Activated CD4-positive, alpha-beta T cell treated with anti-CD3 and anti-CD28 coated beads, Interleukin-2, amount 10 ng/mL, durations not matched to agents 24 days and 14 days (primary cell): ENCODE measurements at regions of chr10 and their contacts with region 1.

Region 1: DNA sequence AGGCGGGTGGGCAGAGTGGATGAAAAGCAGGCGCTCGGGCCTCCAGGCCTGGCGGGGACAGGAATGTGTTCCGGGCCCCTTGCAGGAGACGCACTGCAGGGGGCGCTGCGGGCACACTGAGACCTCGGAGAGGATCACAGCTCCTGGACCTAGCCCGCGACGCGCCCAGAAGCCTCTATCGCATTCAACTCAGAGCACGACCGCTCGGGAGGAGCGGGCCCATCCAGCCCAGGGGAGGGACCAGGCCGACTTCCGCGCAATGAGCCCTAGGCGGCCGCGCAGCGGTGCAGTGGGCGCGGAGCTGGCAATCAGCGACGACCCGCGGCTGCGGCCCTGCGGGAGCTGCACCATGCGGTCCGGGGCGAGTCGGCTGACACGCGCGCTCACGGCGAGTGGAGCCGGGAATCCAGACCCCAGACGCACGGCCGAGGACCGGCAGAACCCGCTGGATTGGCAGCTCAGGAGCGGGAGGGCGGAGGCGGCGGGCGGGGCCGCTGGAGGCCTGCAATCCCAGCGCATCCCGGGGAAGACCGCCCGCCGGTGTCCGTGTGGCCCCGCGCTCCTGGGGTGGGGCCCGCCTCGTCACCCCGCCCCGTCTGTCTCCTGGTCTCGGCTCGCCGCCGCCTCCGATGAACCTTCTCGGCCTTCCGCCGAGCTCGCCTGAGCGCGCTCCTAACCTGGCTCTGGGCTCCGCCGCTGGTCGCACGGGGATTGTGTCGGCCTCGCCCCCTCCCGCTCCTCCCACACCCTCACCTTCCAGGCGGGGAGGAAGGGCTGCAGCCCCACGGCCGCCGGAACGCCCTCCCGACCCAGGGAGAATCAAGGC is 33.5 kb upstream of the GRID1 start:
- DNase-seq: peak; percentile 98
- H3K4me3 Mint-ChIP-seq: peak overlapping the region; percentile 89
- H3K27ac Mint-ChIP-seq: peak overlapping the region; percentile 95
- H3K4me1 Mint-ChIP-seq: peaks cover 22% of the 10 kb centered on the region
- H3K27me3 Mint-ChIP-seq: peaks cover 6% of the 10 kb centered on the region

Region 2: DNA sequence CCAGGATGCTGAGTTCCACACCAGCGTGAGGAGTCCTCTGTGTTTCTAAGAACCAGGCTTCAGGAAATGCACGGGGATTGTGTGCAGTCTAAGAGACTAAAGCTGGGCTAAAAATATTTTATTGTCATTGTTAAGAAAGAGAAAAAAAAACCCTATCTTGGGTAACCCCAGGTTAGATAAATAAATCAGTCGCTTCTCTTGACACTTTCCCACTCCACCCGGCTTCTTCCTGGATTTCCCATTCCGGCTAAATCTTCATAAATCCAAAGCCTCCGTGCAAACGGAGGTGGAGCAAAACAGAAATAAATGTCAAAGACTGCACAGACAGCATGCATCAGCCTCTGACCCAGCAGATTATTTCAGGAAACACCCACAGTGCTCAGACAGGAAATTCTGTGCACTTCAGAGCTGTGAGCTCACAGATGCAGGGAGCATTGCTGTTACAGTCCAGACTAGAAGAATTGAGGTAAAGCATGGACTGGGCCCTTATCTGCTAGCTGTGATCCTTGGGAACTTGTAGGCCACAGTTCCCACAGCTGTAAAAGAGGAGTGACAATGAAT is 11.3 kb after region 1 on chr10:
- intact Hi-C with region 1: loop called (anchors 1 kb)
- DNase-seq: peak; percentile 83
- H3K4me3 Mint-ChIP-seq: peak overlapping the region; percentile 78
- H3K27ac Mint-ChIP-seq: peak overlapping the region; percentile 92
- H3K4me1 Mint-ChIP-seq: peaks cover 36% of the 10 kb centered on the region
- H3K27me3 Mint-ChIP-seq: no peaks in the 10 kb centered on the region

Region 3: DNA sequence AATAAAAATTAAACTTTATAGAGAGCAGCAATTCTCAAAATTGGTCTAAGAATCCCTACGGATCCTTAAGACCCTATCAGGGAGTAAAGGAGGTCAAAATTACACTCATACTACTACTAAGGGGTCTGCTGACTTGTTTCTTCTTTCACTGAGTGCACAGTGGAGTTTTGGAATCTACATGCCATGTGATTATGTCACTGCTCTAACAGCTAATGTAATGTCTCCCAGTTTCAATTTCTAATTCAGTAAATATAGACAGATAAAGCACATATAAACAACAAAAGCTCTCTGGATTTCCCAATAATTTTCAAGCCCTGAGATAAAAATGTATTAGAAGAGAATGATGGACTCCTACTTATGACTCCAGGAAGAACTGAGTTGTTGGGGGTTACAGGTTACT is 46.9 kb after region 1 on chr10:
- intact Hi-C with region 1: loop called (anchors 2 kb)
- DNase-seq: no peak
- H3K4me3 Mint-ChIP-seq: no peak overlapping the region
- H3K27ac Mint-ChIP-seq: peak overlapping the region; percentile 48
- H3K4me1 Mint-ChIP-seq: peaks cover 18% of the 10 kb centered on the region
- H3K27me3 Mint-ChIP-seq: no peaks in the 10 kb centered on the region

Region 4: DNA sequence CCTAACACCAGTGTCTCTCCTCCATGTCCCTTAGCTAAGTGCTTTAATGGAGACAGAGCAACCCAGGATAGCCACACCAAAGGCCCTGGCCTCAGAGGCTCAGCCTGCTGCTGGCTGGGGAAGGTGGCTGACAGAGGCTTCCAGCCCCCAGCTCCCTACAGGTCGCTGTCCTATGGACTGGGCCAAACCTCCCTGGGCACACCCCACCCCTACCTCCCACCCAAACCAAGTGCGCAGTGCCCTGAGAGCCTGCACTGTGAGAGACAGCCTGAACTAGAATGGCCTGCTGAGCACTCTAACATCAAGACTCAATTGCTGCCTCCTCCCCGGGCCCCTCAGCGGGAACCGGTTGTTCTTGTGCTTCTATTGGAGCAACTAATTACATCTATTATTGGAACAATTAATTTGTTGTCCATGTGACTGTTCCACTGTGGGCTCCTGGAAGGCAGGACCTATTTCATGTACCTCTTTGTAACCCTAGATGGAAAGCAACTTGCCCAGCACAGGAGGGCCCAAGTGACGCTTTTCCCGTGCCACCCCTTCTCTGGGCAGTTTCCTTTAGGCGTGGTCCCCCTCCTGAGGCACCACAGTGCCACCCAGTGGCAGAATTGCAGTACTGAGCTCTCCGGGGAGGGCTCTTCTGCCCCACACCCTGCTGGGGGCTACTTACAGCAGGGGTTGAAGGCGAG is 185.1 kb after region 1 on chr10:
- intact Hi-C with region 1: loop called (anchors 1 kb)
- DNase-seq: peak; percentile 93
- H3K4me3 Mint-ChIP-seq: no peak overlapping the region
- H3K27ac Mint-ChIP-seq: no peak overlapping the region
- H3K4me1 Mint-ChIP-seq: peaks cover 2% of the 10 kb centered on the region
- H3K27me3 Mint-ChIP-seq: no peaks in the 10 kb centered on the region

Region 5: DNA sequence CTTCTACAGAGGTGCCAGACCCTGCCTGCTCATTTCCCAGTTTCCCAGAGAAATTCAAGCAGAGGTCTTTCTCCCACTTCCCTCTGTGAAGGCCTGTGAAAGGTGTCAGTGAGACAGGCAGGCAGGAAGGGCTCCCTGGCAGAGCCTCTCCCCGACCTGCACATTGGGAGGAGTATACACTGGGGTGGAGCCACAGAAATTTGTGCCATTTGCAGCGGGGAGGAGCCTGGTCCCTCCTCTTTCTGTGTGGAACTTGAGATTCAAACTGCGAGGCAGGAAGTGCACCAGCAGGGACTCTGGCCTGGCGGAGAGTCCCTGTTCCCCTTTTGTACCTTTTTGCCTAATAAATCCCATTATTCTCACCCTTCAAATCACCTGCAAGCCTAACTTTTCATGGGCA is 199.6 kb after region 1 on chr10:
- intact Hi-C with region 1: no loop called
- DNase-seq: peak; percentile 72
- H3K4me3 Mint-ChIP-seq: no peak overlapping the region
- H3K27ac Mint-ChIP-seq: no peak overlapping the region
- H3K4me1 Mint-ChIP-seq: no peaks in the 10 kb centered on the region
- H3K27me3 Mint-ChIP-seq: peaks cover 8% of the 10 kb centered on the region

Region 6: GRCh38 chr10:86755740-86756510 is 355.8 kb after region 1 on chr10:
- intact Hi-C with region 1: loop called (anchors 10 kb)
- DNase-seq: peak; percentile 97
- H3K4me3 Mint-ChIP-seq: peak overlapping the region; percentile 85
- H3K27ac Mint-ChIP-seq: peak overlapping the region; percentile 86
- H3K4me1 Mint-ChIP-seq: peaks cover 40% of the 10 kb centered on the region
- H3K27me3 Mint-ChIP-seq: peaks cover 36% of the 10 kb centered on the region